Panc1 (cell line): ENCODE measurements at regions of chr11 and their contacts with region 1.

Region 1: DNA sequence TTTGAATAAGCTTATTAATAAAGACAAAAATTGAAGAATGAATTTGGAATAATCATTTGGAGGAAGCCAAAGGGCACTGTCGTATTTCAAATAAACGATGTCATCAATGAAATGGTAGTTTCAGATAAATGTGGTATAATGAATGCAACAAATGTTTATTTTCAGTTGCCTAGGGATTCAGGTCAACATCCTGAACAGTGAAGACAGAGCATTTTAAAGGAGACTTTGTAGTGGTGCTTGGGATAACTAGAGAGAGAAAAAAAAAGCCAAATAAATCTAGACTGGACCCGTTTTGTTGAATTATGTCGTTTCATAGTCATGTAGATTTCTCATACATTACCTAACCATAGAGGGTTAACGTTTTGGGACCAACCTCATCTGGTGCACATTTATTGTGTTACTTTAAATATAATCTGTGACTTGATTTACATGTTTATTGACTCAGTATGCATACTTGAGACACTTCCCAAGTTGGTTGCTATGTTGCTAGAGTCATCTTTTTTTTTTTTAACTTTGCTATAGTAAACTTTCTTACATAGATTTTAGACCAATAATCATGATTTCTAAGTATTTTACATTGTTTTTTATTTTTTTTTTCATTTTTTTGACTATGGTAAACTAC is 111.1 kb downstream of the NCAM1 start:
- DNase-seq: no peak
- ATAC-seq: no peak
- H3K4me3 ChIP-seq: no peak overlapping the region
- H3K27ac ChIP-seq: no peak overlapping the region
- H3K4me1 ChIP-seq: no peaks in the 10 kb centered on the region
- H3K27me3 ChIP-seq: no peaks in the 10 kb centered on the region
- CTCF ChIP-seq: no peak

Region 2: GRCh38 chr11:113082341-113082955 is 10.1 kb after region 1 on chr11:
- CTCF ChIA-PET with region 1: no interaction called
- POLR2A ChIA-PET with region 1: interaction called, 10 read pairs
- in situ Hi-C with region 1: no loop called
- intact Hi-C with region 1: no loop called
- DNase-seq: no peak
- ATAC-seq: no peak
- H3K4me3 ChIP-seq: no peak overlapping the region
- H3K27ac ChIP-seq: no peak overlapping the region
- H3K4me1 ChIP-seq: no peaks in the 10 kb centered on the region
- H3K27me3 ChIP-seq: 0 out of 2 replicates have a peak, but pooled peaks cover 7% of the 10 kb centered on the region
- CTCF ChIP-seq: no peak